Dendritic cell treated with granulocyte-macrophage colony-stimulating factor and Interleukin-4, amounts not matched to agents 40 ng/mL and 50 ng/mL, for 4 days (primary cell): ENCODE measurements at regions of chr5 and their contacts with region 1.

Region 1: GRCh38 chr5:98954392-98955028 is 25.7 kb upstream of the CHD1 start:
- H3K4me3 Mint-ChIP-seq: no peak overlapping the region
- H3K27ac Mint-ChIP-seq: no peak overlapping the region
- H3K4me1 Mint-ChIP-seq: no peaks in the 10 kb centered on the region
- H3K27me3 Mint-ChIP-seq: no peaks in the 10 kb centered on the region

Region 2: GRCh38 chr5:98917433-98917832 is 37.1 kb before region 1 on chr5:
- intact Hi-C with region 1: loop called (anchors 1 kb)
- H3K4me3 Mint-ChIP-seq: no peak overlapping the region
- H3K27ac Mint-ChIP-seq: peak overlapping the region; percentile 22
- H3K4me1 Mint-ChIP-seq: peaks cover 56% of the 10 kb centered on the region
- H3K27me3 Mint-ChIP-seq: no peaks in the 10 kb centered on the region

Region 3: DNA sequence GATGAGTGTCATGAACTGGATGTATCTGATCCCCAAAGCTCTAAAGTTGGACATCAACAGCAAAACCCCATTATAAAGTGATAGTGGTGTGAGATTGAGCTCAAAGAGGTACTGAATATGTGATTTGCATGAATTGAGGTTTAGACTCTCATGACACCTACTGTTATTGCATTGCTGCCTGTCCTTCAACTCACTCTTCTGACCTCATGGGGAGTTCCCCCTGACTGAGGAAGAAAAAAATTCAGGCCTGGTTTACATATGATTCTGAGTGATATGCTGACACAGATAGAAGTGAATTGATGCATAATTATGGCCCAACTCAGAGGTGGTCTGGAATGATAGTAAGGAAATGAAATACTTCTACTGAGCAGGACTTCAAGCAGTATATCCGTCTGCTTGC is 50.5 kb after region 1 on chr5:
- intact Hi-C with region 1: no loop called
- H3K4me3 Mint-ChIP-seq: no peak overlapping the region
- H3K27ac Mint-ChIP-seq: no peak overlapping the region
- H3K4me1 Mint-ChIP-seq: peaks cover 20% of the 10 kb centered on the region
- H3K27me3 Mint-ChIP-seq: no peaks in the 10 kb centered on the region